Mammary epithelial cell (primary cell): ENCODE measurements at regions of chr1 and their contacts with region 1.

Region 1: GRCh38 chr1:200684015-200684414 is 14.3 kb upstream of the DDX59 start:
- DNase-seq: peak; percentile 84
- H3K4me3 ChIP-seq: no peak overlapping the region
- H3K27ac ChIP-seq: peak overlapping the region; percentile 54
- H3K4me1 ChIP-seq: peaks cover 7% of the 10 kb centered on the region
- H3K27me3 ChIP-seq: no peaks in the 10 kb centered on the region
- CTCF ChIP-seq: no peak

Region 2: DNA sequence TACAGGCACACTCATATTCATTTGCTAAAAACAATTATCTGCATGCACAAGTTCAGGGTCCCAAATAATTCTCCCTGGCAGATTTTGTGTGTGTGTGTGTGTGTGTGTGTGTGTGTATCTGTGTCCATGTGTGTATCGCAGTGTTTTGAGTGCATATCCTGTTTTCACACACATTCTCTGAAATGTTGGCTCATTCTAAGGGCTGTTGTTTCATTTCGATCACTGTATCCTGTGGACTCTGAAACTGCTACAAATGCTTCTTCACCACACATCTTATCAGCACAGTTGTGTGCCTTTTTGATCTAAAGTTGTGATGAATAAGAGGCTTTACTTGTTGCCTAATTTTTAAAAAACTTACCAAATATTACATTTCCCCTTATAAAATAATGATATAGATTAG is 621.9 kb before region 1 on chr1:
- CTCF ChIA-PET with region 1: no interaction called
- dilution Hi-C with region 1: no loop called
- in situ Hi-C with region 1: no loop called
- intact Hi-C with region 1: no loop called
- DNase-seq: no peak
- H3K4me3 ChIP-seq: no peak overlapping the region
- H3K27ac ChIP-seq: no peak overlapping the region
- H3K4me1 ChIP-seq: no peaks in the 10 kb centered on the region
- H3K27me3 ChIP-seq: peaks cover 1% of the 10 kb centered on the region
- CTCF ChIP-seq: no peak

Region 3: GRCh38 chr1:200654660-200655059 is 29.4 kb before region 1 on chr1:
- CTCF ChIA-PET with region 1: no interaction called
- dilution Hi-C with region 1: no loop called
- in situ Hi-C with region 1: no loop called
- intact Hi-C with region 1: loop called (anchors 2 kb)
- DNase-seq: peak; percentile 62
- H3K4me3 ChIP-seq: no peak overlapping the region
- H3K27ac ChIP-seq: peak overlapping the region; percentile 89
- H3K4me1 ChIP-seq: peaks cover 32% of the 10 kb centered on the region
- H3K27me3 ChIP-seq: no peaks in the 10 kb centered on the region
- CTCF ChIP-seq: no peak

Region 4: DNA sequence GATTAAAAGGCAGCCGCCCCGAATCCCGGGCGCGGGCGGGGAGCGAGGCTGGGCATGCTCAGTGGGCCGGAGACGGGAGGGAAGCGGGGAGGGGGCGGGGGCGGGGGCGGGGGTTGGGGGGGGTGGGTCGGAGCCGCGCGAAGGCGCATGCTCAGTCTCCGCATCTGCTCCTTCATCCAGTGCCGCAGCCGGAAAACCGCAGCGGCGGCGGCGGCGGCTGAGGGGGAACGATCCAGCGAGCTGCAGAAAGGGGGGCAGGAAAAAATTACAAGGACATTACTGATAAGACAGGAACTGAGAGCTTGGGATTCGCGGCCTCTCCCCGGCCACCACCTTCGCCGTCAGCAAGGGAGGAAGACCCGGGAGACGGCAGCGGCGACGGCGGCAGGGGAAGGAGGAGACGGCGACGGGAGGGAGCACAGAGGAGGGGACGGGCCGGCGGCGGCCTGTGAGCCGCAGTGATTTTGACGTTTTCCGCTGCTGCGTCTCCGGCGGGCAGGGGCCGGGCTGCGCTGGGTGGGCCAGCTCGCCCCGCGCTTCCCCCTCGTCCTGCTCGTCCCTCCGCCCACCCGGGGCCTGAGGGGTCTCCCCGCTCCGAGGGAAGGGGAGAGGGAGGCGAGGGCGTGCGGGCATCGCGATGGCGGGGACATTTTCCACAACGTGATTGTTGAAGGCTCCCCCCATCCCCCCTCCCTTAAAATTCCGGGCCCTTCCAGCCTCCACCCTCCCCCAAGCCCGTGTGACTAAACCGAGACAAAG is 54.9 kb after region 1 on chr1 and contains the start of gene CAMSAP2:
- CTCF ChIA-PET with region 1: no interaction called
- dilution Hi-C with region 1: no loop called
- in situ Hi-C with region 1: loop called in 1 of 2 experiments (anchors 10 kb)
- intact Hi-C with region 1: loop called (anchors 2 kb)
- DNase-seq: peak; percentile 85
- H3K4me3 ChIP-seq: peak within 1 kb of the TSS; percentile 90 to 94 (median 93)
- H3K27ac ChIP-seq: peak within 1 kb of the TSS; percentile 88
- H3K4me1 ChIP-seq: peaks cover 10% of the 10 kb centered on the region
- H3K27me3 ChIP-seq: no peaks in the 10 kb centered on the region
- CTCF ChIP-seq: no peak
- total RNA-seq, gene CAMSAP2: 79.7 to 118 TPM